SK-N-SH (cell line): ENCODE measurements at regions of chr1 and their contacts with region 1.

Region 1: GRCh38 chr1:234553156-234553863 is 56.7 kb downstream of the IRF2BP2 start:
- DNase-seq: peak; percentile 82
- H3K4me3 ChIP-seq: no peak overlapping the region
- H3K27ac ChIP-seq: peak overlapping the region; percentile 82 to 100
- H3K4me1 ChIP-seq: peaks cover 17 to 53% of the 10 kb centered on the region in 2 experiments
- H3K27me3 ChIP-seq: no peaks in the 10 kb centered on the region
- CTCF ChIP-seq: no peak
- EP300 ChIP-seq: peak; percentile 84 to 92; a peak in 3 of 4 replicates
- RAD21 ChIP-seq: peak; percentile 51

Region 2: GRCh38 chr1:234599617-234600417 is 46.5 kb after region 1 on chr1:
- CTCF ChIA-PET with region 1: interaction called, 17 read pairs
- POLR2A ChIA-PET with region 1: interaction called, 16 read pairs
- DNase-seq: peak; percentile 93
- H3K4me3 ChIP-seq: peak overlapping the region; percentile 52 to 57
- H3K27ac ChIP-seq: peak overlapping the region; percentile 98 to 100
- H3K4me1 ChIP-seq: peaks cover 39 to 58% of the 10 kb centered on the region in 2 experiments
- H3K27me3 ChIP-seq: no peaks in the 10 kb centered on the region
- CTCF ChIP-seq: 0 out of 2 replicates have a peak, but pooled peaks have one; percentile 5
- EP300 ChIP-seq: no peak
- RAD21 ChIP-seq: no peak